Activated B cell treated with CpG ODN at 0.5 μM for 24 hours (primary cell): ENCODE measurements at regions of chr9 and their contacts with region 1.

Region 1: GRCh38 chr9:131334629-131335367 is 45.3 kb downstream of the PLPP7 start:
- DNase-seq: no peak
- ATAC-seq: no peak
- H3K4me3 Mint-ChIP-seq: no peak overlapping the region
- H3K27ac Mint-ChIP-seq: no peak overlapping the region
- H3K4me1 Mint-ChIP-seq: peaks cover 3% of the 10 kb centered on the region
- H3K27me3 Mint-ChIP-seq: peaks cover 5% of the 10 kb centered on the region
- CTCF ChIP-seq: no peak

Region 2: GRCh38 chr9:131053896-131054295 is 280.9 kb before region 1 on chr9:
- CTCF ChIA-PET with region 1: interaction called, 20 read pairs
- POLR2A ChIA-PET with region 1: no interaction called
- intact Hi-C with region 1: no loop called
- DNase-seq: no peak
- ATAC-seq: no peak
- H3K4me3 Mint-ChIP-seq: no peak overlapping the region
- H3K27ac Mint-ChIP-seq: no peak overlapping the region
- H3K4me1 Mint-ChIP-seq: no peaks in the 10 kb centered on the region
- H3K27me3 Mint-ChIP-seq: peaks cover 4% of the 10 kb centered on the region
- CTCF ChIP-seq: no peak

Region 3: DNA sequence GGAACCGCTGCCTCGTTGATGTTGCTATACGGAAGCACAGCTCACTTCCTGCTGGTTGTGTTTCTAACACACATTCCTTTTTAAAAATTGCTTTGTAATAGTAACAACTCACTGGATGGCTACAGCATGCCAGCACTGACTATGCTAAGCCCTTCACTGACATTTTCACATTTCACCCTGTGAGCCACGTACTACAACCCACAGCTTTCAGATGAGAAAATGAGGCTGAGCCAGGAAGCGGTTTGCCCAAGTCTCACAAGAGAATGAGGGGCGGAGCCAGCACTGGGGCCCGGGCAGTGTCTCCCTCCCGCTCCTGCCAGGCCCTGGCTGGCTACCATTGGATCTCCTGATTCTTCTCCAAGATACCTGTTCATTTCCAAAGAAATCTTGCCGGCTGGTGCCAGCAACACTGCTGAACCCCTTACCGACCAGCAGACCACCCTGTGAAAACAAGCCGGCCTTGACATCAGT is 96.8 kb before region 1 on chr9:
- CTCF ChIA-PET with region 1: interaction called, 5 read pairs
- POLR2A ChIA-PET with region 1: interaction called, 12 read pairs
- intact Hi-C with region 1: loop called (anchors 10 kb)
- DNase-seq: peak; percentile 58
- ATAC-seq: peak; percentile 97
- H3K4me3 Mint-ChIP-seq: peak overlapping the region; percentile 87
- H3K27ac Mint-ChIP-seq: peak overlapping the region; percentile 96
- H3K4me1 Mint-ChIP-seq: peaks cover 17% of the 10 kb centered on the region
- H3K27me3 Mint-ChIP-seq: no peaks in the 10 kb centered on the region
- CTCF ChIP-seq: no peak

Region 4: DNA sequence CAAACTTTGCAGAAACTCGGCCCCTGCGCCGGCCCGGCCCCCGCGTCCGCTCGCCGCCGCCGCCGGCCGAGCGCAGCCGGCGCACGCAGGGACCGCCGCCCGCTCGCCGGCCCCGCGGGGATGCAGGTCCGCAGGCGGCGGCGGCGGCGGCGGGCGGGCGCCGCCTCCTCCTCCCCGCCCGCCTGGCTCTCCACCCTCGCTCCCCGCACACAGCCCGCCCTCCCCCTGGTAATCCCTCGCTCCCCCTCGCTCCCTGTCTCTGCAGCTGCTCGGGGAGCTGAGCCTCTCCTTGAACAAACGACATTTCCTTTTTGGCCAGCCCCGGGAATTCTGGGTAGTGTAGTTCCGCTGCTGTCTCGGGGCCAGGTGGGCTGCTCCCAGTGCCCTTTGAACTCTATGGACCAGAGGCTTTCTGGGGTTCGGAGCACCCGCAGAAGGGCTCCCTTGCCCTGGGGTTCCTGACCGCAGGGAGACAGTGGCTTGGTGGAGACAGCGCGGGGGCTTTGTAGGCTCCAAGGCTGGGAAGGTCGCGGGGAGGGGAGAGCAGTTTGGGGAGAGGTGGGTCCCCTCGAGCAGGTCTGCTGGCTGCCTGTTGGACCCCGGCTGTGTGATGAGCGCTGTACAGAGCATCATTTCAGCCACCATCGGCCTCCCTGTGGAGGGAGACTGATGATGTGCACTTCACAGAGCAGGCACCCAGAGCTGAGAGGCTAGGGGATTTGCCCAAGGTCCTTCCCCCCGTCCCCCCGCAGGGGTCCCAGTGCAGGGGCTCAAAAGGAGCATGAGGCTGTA is 56.7 kb before region 1 on chr9:
- CTCF ChIA-PET with region 1: interaction called, 5 read pairs
- POLR2A ChIA-PET with region 1: interaction called, 3 read pairs
- intact Hi-C with region 1: loop called (anchors 1 kb)
- DNase-seq: peak; percentile 48
- ATAC-seq: peak; percentile 48
- H3K4me3 Mint-ChIP-seq: peak overlapping the region; percentile 91
- H3K27ac Mint-ChIP-seq: peak overlapping the region; percentile 80
- H3K4me1 Mint-ChIP-seq: peaks cover 37% of the 10 kb centered on the region
- H3K27me3 Mint-ChIP-seq: peaks cover 12% of the 10 kb centered on the region
- CTCF ChIP-seq: no peak